Panc1 (cell line): ENCODE measurements at regions of chr9 and their contacts with region 1.

Region 1: GRCh38 chr9:96856363-96857286 is 2.3 kb upstream of the ZNF782 start:
- DNase-seq: peak; percentile 55
- ATAC-seq: peak; percentile 74
- H3K4me3 ChIP-seq: no peak overlapping the region
- H3K27ac ChIP-seq: no peak overlapping the region
- H3K4me1 ChIP-seq: peaks cover 9% of the 10 kb centered on the region
- H3K27me3 ChIP-seq: no peaks in the 10 kb centered on the region
- CTCF ChIP-seq: peak; percentile 87

Region 2: DNA sequence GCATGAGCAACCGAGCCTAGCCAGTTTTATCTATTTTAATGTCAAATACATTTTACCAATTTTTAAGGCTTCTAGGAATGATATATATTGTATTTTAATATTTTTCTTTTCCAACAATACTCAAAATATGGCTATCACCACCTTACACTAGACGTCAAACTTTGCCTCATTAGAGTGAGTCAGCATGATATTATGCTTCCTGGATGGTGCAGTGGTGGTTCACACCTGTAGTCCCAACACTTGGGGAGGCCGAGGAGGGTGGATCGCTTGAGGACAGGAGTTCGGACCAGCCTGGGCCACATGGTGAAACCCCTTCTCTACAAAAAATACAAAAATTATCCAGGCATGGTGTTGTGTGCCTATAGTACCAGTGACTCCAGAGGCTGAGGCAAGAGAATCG is 229.7 kb before region 1 on chr9:
- CTCF ChIA-PET with region 1: no interaction called
- POLR2A ChIA-PET with region 1: no interaction called
- in situ Hi-C with region 1: no loop called
- intact Hi-C with region 1: no loop called
- DNase-seq: no peak
- ATAC-seq: no peak
- H3K4me3 ChIP-seq: no peak overlapping the region
- H3K27ac ChIP-seq: no peak overlapping the region
- H3K4me1 ChIP-seq: no peaks in the 10 kb centered on the region
- H3K27me3 ChIP-seq: no peaks in the 10 kb centered on the region
- CTCF ChIP-seq: no peak

Region 3: GRCh38 chr9:96779089-96779488 is 77.5 kb before region 1 on chr9:
- CTCF ChIA-PET with region 1: no interaction called
- POLR2A ChIA-PET with region 1: no interaction called
- in situ Hi-C with region 1: no loop called
- intact Hi-C with region 1: no loop called
- DNase-seq: no peak
- ATAC-seq: no peak
- H3K4me3 ChIP-seq: no peak overlapping the region; a peak in 1 of 4 replicates
- H3K27ac ChIP-seq: no peak overlapping the region
- H3K4me1 ChIP-seq: no peaks in the 10 kb centered on the region; the same call in 1 of the 2 replicates
- H3K27me3 ChIP-seq: no peaks in the 10 kb centered on the region
- CTCF ChIP-seq: no peak

Region 4: DNA sequence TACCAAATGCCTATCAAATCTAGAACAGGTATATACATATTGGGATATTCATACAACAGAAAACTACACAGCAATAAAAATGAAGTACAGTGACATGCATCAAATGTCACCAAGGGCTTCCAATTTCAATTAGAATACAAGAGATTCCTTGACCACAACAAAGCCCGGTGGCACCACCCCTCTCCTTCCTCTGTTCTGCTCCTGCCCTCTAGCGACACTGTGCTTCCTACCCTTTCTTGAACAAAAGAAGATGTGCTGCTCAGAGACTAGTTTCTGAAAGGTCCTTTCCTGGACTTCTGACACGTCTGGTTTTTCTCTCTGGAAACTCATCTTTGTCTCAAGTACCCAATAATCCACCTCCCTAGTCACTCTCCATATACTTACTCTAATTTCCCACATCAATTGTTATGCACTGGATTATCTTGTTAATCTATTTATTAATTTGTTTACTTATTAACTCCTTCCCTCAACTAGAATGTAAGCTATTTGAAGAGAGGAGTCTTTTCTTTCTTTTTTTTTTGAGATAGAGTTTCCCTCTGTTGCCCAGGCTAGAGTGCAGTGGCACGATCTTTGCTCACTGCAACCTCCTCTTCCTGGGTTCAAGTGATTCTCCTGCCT is 252.7 kb after region 1 on chr9:
- CTCF ChIA-PET with region 1: no interaction called
- POLR2A ChIA-PET with region 1: no interaction called
- in situ Hi-C with region 1: no loop called
- intact Hi-C with region 1: loop called (anchors 2 kb)
- DNase-seq: peak; percentile 39
- ATAC-seq: peak; percentile 91
- H3K4me3 ChIP-seq: no peak overlapping the region
- H3K27ac ChIP-seq: no peak overlapping the region
- H3K4me1 ChIP-seq: no peaks in the 10 kb centered on the region
- H3K27me3 ChIP-seq: no peaks in the 10 kb centered on the region
- CTCF ChIP-seq: peak; percentile 73

Region 5: DNA sequence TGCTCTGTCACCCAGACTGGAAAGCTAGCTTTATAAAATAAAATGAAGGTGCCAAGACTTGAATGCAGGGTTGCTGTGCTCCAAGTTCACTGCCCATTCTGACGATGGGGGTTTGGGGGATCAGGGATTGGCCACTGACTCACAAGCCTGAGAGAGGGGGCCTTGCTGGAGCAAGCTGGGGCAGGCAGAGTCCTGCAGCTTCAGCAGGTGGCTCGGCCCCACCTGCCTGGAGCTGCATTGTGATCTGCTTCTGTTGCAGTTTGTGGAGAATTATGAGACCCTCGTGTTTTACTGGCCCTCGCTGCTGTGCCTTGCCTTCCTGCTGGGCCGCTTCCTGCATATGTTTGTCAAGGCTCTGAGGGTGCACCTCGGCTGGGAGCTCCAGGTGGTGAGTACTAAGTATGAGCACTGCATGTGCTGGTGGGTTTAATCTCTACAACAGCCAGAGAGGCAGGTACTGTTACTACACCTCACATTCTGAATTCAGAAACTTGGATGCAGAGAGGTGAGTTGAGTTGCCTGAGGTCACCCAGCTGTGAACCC is 419.8 kb after region 1 on chr9:
- CTCF ChIA-PET with region 1: no interaction called
- POLR2A ChIA-PET with region 1: no interaction called
- in situ Hi-C with region 1: no loop called
- intact Hi-C with region 1: no loop called
- DNase-seq: no peak
- ATAC-seq: no peak
- H3K4me3 ChIP-seq: no peak overlapping the region
- H3K27ac ChIP-seq: no peak overlapping the region
- H3K4me1 ChIP-seq: no peaks in the 10 kb centered on the region
- H3K27me3 ChIP-seq: no peaks in the 10 kb centered on the region
- CTCF ChIP-seq: no peak

Region 6: DNA sequence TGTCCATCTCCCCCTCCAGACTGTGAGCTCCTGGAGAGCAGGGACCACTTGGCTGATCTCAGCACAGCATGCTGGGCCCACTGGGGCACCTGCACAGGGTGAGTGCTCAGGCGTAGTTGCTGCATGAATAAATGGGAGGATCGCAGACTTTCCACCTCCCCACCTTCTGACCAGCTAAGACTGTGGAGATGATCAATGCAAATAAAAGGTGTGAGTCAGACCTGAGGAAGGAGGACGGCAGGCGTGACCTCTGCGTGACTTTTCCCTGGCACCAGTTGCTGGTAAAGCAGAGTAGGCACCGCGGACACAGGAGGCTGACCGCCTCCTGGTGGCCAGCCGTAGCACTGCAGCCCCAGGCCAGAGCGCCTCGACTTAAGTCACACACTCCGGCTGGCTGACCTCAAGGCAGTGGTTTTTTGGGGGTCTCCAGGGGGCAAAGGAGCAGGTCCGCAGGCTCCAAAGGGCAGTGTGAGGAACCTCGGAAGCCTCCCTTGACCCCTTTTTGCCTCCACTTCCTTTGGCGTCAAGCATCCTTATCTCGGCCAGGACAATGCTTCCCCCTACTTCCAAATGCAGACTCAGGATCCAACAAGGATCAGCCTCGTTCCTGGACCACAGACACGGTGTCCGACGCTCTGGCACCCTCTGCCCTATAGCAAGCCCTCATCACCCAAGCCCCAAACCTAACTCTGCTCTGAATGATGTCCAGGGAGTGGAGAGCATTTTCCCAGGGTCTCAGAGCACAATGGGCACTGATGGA is 542.6 kb after region 1 on chr9:
- CTCF ChIA-PET with region 1: no interaction called
- POLR2A ChIA-PET with region 1: no interaction called
- in situ Hi-C with region 1: no loop called
- intact Hi-C with region 1: loop called (anchors 5 kb)
- DNase-seq: peak; percentile 55
- ATAC-seq: peak; percentile 88
- H3K4me3 ChIP-seq: no peak overlapping the region
- H3K27ac ChIP-seq: no peak overlapping the region
- H3K4me1 ChIP-seq: no peaks in the 10 kb centered on the region
- H3K27me3 ChIP-seq: no peaks in the 10 kb centered on the region
- CTCF ChIP-seq: peak; percentile 92